Endothelial cell of umbilical vein (primary cell): ENCODE measurements at regions of chr4 and their contacts with region 1.

Region 1: GRCh38 chr4:26719954-26720552 is 136.2 kb downstream of the TBC1D19 start:
- DNase-seq: peak; percentile 45
- H3K4me3 ChIP-seq: no peak overlapping the region
- H3K27ac ChIP-seq: no peak overlapping the region
- H3K4me1 ChIP-seq: no peaks in the 10 kb centered on the region
- H3K27me3 ChIP-seq: no peaks in the 10 kb centered on the region
- CTCF ChIP-seq: peak in 1 of 2 donors; percentile 34
- POLR2A ChIP-seq: no peak

Region 2: GRCh38 chr4:26459054-26459755 is 260.8 kb before region 1 on chr4:
- CTCF ChIA-PET with region 1: interaction called, 79 read pairs
- POLR2A ChIA-PET with region 1: no interaction called
- dilution Hi-C with region 1: no loop called
- intact Hi-C with region 1: loop called (anchors 1 kb)
- DNase-seq: peak; percentile 51
- H3K4me3 ChIP-seq: no peak overlapping the region
- H3K27ac ChIP-seq: no peak overlapping the region
- H3K4me1 ChIP-seq: no peaks in the 10 kb centered on the region
- H3K27me3 ChIP-seq: peaks cover 11% of the 10 kb centered on the region in 2 experiments
- CTCF ChIP-seq: peak; percentile 40 to 42
- POLR2A ChIP-seq: no peak